ENCODE measurements at regions of chr4 and their contacts with region 1.

Region 1: GRCh38 chr4:110516106-110516922 is 40.4 kb downstream of the ENPEP start:
- DNase-seq: peak; percentile 78
- ATAC-seq: peak; percentile 81
- H3K4me3 Mint-ChIP-seq: peak overlapping the region; percentile 83
- H3K27ac Mint-ChIP-seq: peak overlapping the region; percentile 71
- H3K4me1 Mint-ChIP-seq: peaks cover 16% of the 10 kb centered on the region
- H3K27me3 Mint-ChIP-seq: peaks cover 6% of the 10 kb centered on the region
- CTCF ChIP-seq: peak; percentile 89

Region 2: DNA sequence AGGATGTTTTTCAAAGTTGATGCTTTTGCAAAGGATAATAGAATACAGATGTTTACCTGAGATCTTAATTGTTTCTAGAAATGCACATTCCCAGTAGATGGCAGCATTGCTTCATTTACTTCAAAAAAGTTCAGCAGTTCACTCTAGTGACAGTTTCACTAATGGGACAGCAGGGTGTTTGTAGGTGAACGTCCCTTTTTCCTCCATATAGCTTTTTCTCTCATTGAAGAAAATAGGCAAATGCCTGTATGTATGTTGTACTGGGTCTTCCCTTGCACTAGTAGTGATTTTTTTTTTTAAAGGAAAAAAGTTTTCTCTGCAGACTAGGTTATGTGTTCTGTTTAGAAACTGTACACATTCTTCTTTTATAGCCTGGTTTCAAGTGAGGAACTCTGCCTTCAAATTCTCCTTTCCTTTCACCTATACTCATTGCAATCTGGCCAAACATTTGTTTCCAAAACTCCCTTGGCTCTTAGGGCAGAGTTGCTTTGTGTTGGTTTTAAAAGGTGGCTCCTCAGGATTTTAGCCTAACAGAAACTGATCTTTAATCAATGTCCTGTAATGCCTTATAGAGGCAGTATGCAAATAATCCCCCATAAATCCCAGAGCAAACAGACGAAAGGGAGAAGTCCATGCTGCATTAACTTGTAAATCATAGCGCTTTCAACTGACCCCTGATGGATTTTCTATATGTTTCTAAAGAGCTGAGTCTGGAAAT is 517.3 kb before region 1 on chr4:
- CTCF ChIA-PET with region 1: interaction called, 194 read pairs
- POLR2A ChIA-PET with region 1: interaction called, 3 read pairs
- intact Hi-C with region 1: loop called (anchors 2 kb)
- DNase-seq: peak; percentile 11
- ATAC-seq: peak; percentile 61
- H3K4me3 Mint-ChIP-seq: no peak overlapping the region
- H3K27ac Mint-ChIP-seq: no peak overlapping the region
- H3K4me1 Mint-ChIP-seq: peaks cover 8% of the 10 kb centered on the region
- H3K27me3 Mint-ChIP-seq: peaks cover 8% of the 10 kb centered on the region
- CTCF ChIP-seq: peak; percentile 80

Region 3: DNA sequence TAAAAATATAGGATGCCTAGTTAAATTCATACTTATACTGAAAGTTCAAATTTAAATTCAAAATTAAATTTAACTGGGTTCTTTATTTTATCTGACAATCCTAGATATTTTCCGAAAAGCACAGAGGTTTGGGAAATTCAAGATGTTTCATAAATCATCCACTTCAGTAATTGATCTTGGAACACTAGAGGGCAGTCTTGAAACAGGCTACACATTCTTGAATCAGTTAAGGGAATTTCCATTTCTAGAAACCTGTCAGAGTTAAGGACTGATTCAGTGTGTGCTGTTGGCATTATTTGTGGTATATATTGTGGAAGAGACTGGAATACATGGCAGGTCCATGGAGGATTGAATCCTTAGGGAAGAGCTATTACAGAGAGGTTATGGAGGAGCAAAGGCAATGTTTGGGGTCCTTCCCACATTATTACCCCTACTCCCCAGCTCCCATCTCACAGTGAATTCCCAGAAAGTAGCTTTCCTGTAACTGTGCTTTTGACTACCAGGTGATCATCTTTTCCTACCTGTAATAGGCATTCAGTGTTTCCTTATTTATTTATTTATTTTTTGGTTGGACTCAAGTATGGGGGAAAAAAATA is 510.8 kb before region 1 on chr4:
- CTCF ChIA-PET with region 1: interaction called, 194 read pairs
- POLR2A ChIA-PET with region 1: no interaction called
- intact Hi-C with region 1: no loop called
- DNase-seq: no peak
- ATAC-seq: peak; percentile 77
- H3K4me3 Mint-ChIP-seq: no peak overlapping the region
- H3K27ac Mint-ChIP-seq: no peak overlapping the region
- H3K4me1 Mint-ChIP-seq: peaks cover 2% of the 10 kb centered on the region
- H3K27me3 Mint-ChIP-seq: peaks cover 2% of the 10 kb centered on the region
- CTCF ChIP-seq: peak; percentile 90

Region 4: DNA sequence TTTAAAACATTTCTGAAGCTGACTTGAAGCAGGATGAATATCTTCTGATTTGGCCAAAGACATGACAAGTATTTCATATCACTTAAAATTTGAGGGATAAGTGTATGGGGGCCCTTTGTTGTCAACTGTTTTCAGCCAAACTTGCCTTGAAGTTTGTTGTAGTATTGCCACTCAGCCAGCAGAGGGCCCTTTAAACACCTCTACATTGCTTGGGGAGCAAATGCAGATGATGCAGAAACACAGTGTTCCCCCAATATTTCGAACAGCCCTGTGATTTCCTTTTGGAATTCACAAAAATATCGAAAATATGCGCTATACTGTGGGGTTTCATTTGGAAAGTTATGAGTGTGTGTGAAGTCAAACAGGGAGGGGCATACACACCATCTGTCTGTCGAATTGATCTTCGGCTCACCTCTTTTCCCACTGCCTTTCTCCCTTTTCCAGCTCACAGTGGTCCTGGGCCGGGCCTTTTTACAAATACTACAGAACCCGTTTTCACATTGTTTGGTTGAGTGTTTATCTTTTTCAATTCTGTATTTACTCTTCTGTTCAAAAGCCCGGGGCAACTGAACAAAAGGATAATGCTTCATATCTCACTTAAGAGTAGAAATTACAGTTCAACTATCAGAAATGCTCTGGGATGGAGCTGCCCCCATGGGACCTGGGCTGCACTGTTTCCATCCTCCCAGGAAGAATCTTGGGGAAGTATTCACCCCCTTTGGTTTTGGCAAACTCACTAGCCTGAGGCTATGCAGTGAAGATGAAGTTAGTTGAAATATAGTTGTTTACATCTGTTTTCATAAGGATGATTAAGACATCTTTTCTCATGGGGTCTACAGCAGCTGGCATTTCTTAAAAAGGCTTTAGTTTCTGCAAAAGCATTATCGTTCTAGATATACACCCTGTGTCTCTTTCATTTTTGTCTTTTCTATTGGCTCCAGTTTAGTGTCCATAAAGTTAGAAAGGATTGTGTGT is 466.1 kb before region 1 on chr4:
- CTCF ChIA-PET with region 1: interaction called, 17 read pairs
- POLR2A ChIA-PET with region 1: no interaction called
- intact Hi-C with region 1: no loop called
- DNase-seq: peak; percentile 65
- ATAC-seq: peak; percentile 73
- H3K4me3 Mint-ChIP-seq: no peak overlapping the region
- H3K27ac Mint-ChIP-seq: no peak overlapping the region
- H3K4me1 Mint-ChIP-seq: peaks cover 4% of the 10 kb centered on the region
- H3K27me3 Mint-ChIP-seq: no peaks in the 10 kb centered on the region
- CTCF ChIP-seq: peak; percentile 64

Region 5: GRCh38 chr4:110310795-110311194 is 205.5 kb before region 1 on chr4:
- CTCF ChIA-PET with region 1: interaction called, 18 read pairs
- POLR2A ChIA-PET with region 1: no interaction called
- intact Hi-C with region 1: loop called (anchors 5 kb)
- DNase-seq: no peak
- ATAC-seq: no peak
- H3K4me3 Mint-ChIP-seq: no peak overlapping the region
- H3K27ac Mint-ChIP-seq: no peak overlapping the region
- H3K4me1 Mint-ChIP-seq: no peaks in the 10 kb centered on the region
- H3K27me3 Mint-ChIP-seq: peaks cover 13% of the 10 kb centered on the region
- CTCF ChIP-seq: no peak

Region 6: DNA sequence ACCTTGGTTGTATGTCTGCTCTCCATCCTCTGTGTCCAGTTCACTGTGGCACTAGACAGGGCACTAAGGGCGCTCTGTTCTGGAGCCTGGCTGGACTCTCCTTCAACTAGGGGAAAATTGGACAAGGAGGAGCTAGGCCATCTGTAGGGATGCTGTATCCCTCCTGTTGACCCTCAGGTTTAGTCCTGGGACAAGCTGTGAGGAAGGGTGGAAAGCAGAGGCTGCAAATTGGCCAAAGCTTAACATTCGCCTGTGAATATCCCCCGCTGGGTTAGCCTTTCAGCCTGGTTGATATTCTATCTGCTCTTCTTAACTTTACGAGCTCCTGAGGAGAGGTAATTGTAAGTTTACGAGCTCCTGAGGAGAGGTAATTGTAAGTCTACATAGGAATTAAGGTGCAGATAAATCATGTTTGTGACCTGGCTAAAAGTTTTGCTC is 104.7 kb before region 1 on chr4:
- CTCF ChIA-PET with region 1: no interaction called
- POLR2A ChIA-PET with region 1: no interaction called
- intact Hi-C with region 1: no loop called
- DNase-seq: no peak
- ATAC-seq: no peak
- H3K4me3 Mint-ChIP-seq: no peak overlapping the region
- H3K27ac Mint-ChIP-seq: no peak overlapping the region
- H3K4me1 Mint-ChIP-seq: no peaks in the 10 kb centered on the region
- H3K27me3 Mint-ChIP-seq: peaks cover 15% of the 10 kb centered on the region
- CTCF ChIP-seq: no peak

Region 7: GRCh38 chr4:110527156-110527555 is 10.8 kb after region 1 on chr4:
- CTCF ChIA-PET with region 1: interaction called, 30 read pairs
- POLR2A ChIA-PET with region 1: no interaction called
- intact Hi-C with region 1: no loop called
- DNase-seq: peak; percentile 61
- ATAC-seq: peak; percentile 86
- H3K4me3 Mint-ChIP-seq: no peak overlapping the region
- H3K27ac Mint-ChIP-seq: peak overlapping the region; percentile 3
- H3K4me1 Mint-ChIP-seq: peaks cover 14% of the 10 kb centered on the region
- H3K27me3 Mint-ChIP-seq: peaks cover 29% of the 10 kb centered on the region
- CTCF ChIP-seq: no peak